Activated CD4-positive, alpha-beta T cell treated with anti-CD3 and anti-CD28 coated beads, Interleukin-2, amount 10 ng/mL, durations not matched to agents 7 days and 5 days (primary cell): ENCODE measurements at regions of chr2 and their contacts with region 1.

Region 1: GRCh38 chr2:24955232-24955631 is 16.5 kb downstream of the DNAJC27 start:
- DNase-seq: no peak
- H3K4me3 Mint-ChIP-seq: no peak overlapping the region
- H3K27ac Mint-ChIP-seq: no peak overlapping the region
- H3K4me1 Mint-ChIP-seq: no peaks in the 10 kb centered on the region
- H3K27me3 Mint-ChIP-seq: no peaks in the 10 kb centered on the region

Region 2: GRCh38 chr2:24658531-24659202 is 296.6 kb before region 1 on chr2:
- CTCF ChIA-PET with region 1: no interaction called
- POLR2A ChIA-PET with region 1: no interaction called
- DNase-seq: no peak
- H3K4me3 Mint-ChIP-seq: no peak overlapping the region
- H3K27ac Mint-ChIP-seq: no peak overlapping the region
- H3K4me1 Mint-ChIP-seq: no peaks in the 10 kb centered on the region
- H3K27me3 Mint-ChIP-seq: no peaks in the 10 kb centered on the region

Region 3: GRCh38 chr2:24754985-24755705 is 200.1 kb before region 1 on chr2:
- CTCF ChIA-PET with region 1: no interaction called
- POLR2A ChIA-PET with region 1: no interaction called
- DNase-seq: no peak
- H3K4me3 Mint-ChIP-seq: no peak overlapping the region
- H3K27ac Mint-ChIP-seq: no peak overlapping the region
- H3K4me1 Mint-ChIP-seq: no peaks in the 10 kb centered on the region
- H3K27me3 Mint-ChIP-seq: no peaks in the 10 kb centered on the region

Region 4: GRCh38 chr2:24943427-24944053 is 11.7 kb before region 1 on chr2:
- CTCF ChIA-PET with region 1: interaction called, 15 read pairs
- POLR2A ChIA-PET with region 1: no interaction called
- DNase-seq: no peak
- H3K4me3 Mint-ChIP-seq: no peak overlapping the region
- H3K27ac Mint-ChIP-seq: no peak overlapping the region
- H3K4me1 Mint-ChIP-seq: peaks cover 4% of the 10 kb centered on the region
- H3K27me3 Mint-ChIP-seq: no peaks in the 10 kb centered on the region

Region 5: DNA sequence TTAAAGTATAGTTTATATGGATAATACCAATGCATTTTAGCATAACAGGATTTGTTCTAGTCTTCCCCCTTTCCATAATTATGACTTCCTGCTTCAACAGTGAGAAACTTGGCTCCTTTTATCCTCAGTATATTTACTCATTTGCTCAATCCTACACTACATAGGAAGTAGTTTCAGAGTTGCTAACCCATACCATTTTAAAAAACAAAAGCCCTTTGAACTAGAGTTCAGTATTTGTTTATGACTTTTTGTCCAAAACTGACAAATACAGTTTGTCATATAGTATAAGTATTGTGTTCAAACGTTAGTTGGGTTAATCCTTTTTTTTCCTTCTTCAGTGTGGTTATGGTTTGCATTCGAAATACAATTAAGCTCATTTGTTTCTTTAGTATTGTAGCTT is 22.4 kb after region 1 on chr2:
- CTCF ChIA-PET with region 1: no interaction called
- POLR2A ChIA-PET with region 1: no interaction called
- DNase-seq: no peak
- H3K4me3 Mint-ChIP-seq: no peak overlapping the region
- H3K27ac Mint-ChIP-seq: no peak overlapping the region
- H3K4me1 Mint-ChIP-seq: peaks cover 12% of the 10 kb centered on the region
- H3K27me3 Mint-ChIP-seq: no peaks in the 10 kb centered on the region

Region 6: DNA sequence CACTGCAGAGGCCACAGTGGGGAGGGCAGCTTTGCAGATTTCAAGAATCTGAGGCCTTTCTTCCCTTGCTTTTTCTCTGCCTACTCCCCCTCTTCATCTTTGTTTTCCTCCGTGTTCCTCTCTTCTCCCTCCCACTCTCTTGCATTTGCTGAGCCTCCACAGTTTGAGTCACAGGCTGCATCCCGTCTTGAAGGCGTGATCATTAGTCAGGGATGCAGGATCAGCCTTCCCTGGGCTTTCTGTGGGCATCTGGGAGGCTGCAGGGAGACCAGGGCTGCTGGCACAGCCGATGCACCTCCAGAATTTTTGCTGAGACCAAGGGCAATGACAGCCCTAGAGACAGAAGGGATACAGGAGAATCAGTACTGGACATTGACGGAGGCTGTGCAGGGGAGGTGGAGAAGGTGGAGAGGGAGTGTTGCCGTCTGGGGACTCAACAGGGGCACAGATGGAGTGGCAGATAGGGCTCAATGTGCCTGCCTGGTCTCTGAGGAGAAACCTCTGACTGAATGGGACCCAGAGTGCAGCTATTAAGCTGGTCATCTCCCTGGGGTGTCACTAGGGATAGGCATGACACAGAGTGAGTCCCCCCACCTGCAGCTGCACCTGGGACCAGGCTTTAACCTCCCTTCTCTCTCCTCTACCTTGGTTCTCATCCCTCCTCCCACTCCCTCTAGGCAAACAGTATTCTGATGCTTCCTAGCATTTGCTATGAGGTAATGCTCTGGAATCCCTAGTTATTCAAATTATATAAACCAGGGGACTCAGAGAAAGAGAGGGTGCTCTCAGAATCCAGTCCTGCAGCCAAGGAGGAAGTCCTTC is 45.5 kb after region 1 on chr2:
- CTCF ChIA-PET with region 1: no interaction called
- POLR2A ChIA-PET with region 1: no interaction called
- DNase-seq: no peak
- H3K4me3 Mint-ChIP-seq: no peak overlapping the region
- H3K27ac Mint-ChIP-seq: no peak overlapping the region
- H3K4me1 Mint-ChIP-seq: no peaks in the 10 kb centered on the region
- H3K27me3 Mint-ChIP-seq: peaks cover 3% of the 10 kb centered on the region